GM12878 (cell line): ENCODE measurements at regions of chr1 and their contacts with region 1.

Region 1: GRCh38 chr1:174022080-174022975 is at the start of gene RC3H1:
- DNase-seq: peak; percentile 53
- ATAC-seq: peak; percentile 90
- H3K4me3 ChIP-seq: peak within 1 kb of the TSS; percentile 99
- H3K27ac ChIP-seq: peak within 1 kb of the TSS; percentile 88
- H3K4me1 ChIP-seq: peaks cover 5% of the 10 kb centered on the region
- H3K27me3 ChIP-seq: no peaks in the 10 kb centered on the region
- CTCF ChIP-seq: no peak
- EP300 ChIP-seq: 0 out of 4 replicates have a peak, but pooled peaks of 1 of the 2 experiments have one; percentile 15
- POLR2A ChIP-seq: peak; percentile 97
- RAD21 ChIP-seq: no peak
- polyA plus RNA-seq, gene RC3H1: 1.4 to 3.2 TPM

Region 2: DNA sequence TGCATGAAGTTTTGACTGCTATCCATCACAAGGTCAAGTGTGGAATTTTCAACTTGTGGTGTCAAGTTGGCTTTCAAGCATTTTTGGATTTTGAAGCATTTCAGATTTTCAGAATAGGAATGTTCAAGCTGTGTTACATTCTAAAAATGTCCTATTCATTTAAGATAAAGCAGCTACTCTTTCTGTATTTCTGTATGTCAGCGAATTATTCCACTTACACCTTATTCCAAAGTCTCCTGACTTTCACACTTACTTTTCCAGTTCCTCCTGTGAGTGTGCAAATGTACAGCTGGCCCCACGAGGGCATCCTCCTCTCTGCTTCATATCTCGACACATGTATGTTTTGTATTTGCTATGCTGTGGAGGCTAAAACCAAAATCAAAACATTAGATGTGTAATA is 52.1 kb before region 1 on chr1:
- CTCF ChIA-PET with region 1: no interaction called
- POLR2A ChIA-PET with region 1: no interaction called
- RAD21 ChIA-PET with region 1: no interaction called
- SMC1A ChIA-PET with region 1: interaction called, 3 read pairs
- in situ Hi-C with region 1: no loop called
- intact Hi-C with region 1: loop called (anchors 5 kb)
- DNase-seq: no peak
- ATAC-seq: no peak
- H3K4me3 ChIP-seq: no peak overlapping the region
- H3K27ac ChIP-seq: no peak overlapping the region
- H3K4me1 ChIP-seq: no peaks in the 10 kb centered on the region
- H3K27me3 ChIP-seq: no peaks in the 10 kb centered on the region
- CTCF ChIP-seq: no peak
- EP300 ChIP-seq: no peak
- POLR2A ChIP-seq: no peak
- RAD21 ChIP-seq: no peak

Region 3: DNA sequence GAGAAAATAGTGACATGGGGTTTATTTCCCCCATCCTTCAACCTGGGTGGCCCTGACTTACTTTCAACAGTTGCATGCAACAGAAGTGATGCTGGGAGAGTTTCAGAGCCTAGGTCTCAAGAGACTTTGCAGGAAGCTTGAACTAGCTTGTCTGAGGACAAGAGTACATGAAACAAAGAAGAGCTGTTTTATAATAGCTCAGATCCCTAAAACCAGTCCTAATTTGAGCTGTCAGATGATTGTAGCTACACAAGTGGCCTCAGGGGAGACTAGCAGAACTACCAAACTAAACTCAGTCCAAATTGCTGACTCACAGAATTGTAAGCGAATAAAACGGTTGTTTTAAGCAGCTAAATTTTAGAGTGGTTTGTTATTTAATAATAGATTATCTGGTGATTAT is 17.3 kb before region 1 on chr1:
- CTCF ChIA-PET with region 1: interaction called, 4 read pairs
- POLR2A ChIA-PET with region 1: interaction called, 16 read pairs
- RAD21 ChIA-PET with region 1: interaction called, 23 read pairs
- SMC1A ChIA-PET with region 1: interaction called, 16 read pairs
- in situ Hi-C with region 1: no loop called
- intact Hi-C with region 1: loop called (anchors 2 kb)
- DNase-seq: peak; percentile 83
- ATAC-seq: peak; percentile 95
- H3K4me3 ChIP-seq: no peak overlapping the region
- H3K27ac ChIP-seq: peak overlapping the region; percentile 54
- H3K4me1 ChIP-seq: peaks cover 10% of the 10 kb centered on the region
- H3K27me3 ChIP-seq: no peaks in the 10 kb centered on the region
- CTCF ChIP-seq: no peak
- EP300 ChIP-seq: peak; percentile 32 to 70; a peak in 1 of 4 replicates
- POLR2A ChIP-seq: no peak
- RAD21 ChIP-seq: no peak

Region 4: DNA sequence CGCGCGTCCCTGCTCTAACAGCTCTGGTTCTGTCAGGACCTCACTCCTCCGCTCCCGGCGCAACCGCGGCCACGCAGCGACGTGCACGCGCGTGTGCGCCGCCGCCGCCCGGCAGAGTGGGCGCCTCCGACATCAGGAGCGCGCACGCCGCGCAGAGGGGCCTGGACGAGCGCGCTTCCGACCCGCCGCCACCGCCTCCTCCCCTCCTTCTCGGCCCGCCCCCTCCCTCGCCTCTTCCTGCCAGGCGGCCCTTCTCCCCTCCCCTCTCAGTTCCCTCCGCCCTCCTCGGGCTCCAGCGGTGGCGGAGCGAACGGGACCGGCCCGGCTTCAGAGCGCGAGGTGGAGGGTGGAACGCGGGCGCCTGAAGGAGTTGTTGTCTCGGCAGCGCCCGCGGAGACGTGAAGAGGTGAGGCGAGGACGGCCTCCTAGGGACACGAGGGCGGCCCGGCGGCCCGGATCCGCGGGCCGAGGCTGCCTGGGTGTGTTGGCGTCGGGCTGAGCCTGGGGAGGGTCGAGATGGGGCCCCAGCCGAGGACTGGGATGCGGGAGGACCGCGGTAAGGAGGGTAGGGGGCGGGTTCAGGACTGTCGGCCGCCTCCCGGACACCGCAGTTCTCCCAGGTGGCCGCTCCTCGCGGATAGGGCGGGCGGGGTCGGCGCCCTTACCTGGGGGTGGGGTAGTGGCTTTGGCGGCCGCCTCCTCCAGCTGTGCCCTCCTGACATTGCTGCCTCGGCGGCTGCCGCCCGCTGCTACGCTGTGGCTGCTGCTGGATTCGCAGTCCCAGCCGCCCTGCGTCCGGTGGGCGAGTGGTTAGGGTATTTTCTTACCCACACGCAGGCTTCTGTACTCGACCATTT is 137.2 kb after region 1 on chr1 and contains the start of gene RABGAP1L:
- CTCF ChIA-PET with region 1: no interaction called
- POLR2A ChIA-PET with region 1: no interaction called
- RAD21 ChIA-PET with region 1: no interaction called
- SMC1A ChIA-PET with region 1: no interaction called
- in situ Hi-C with region 1: no loop called
- intact Hi-C with region 1: loop called (anchors 5 kb)
- DNase-seq: peak; percentile 55
- ATAC-seq: peak; percentile 84
- H3K4me3 ChIP-seq: peak within 1 kb of the TSS; percentile 91
- H3K27ac ChIP-seq: peak within 1 kb of the TSS; percentile 93
- H3K4me1 ChIP-seq: peaks cover 31% of the 10 kb centered on the region
- H3K27me3 ChIP-seq: no peaks in the 10 kb centered on the region; a peak in 1 of 4 replicates
- CTCF ChIP-seq: no peak
- EP300 ChIP-seq: no peak
- POLR2A ChIP-seq: peak; percentile 96
- RAD21 ChIP-seq: 0 out of 2 replicates have a peak, but pooled peaks have one; percentile 6
- polyA plus RNA-seq, gene RABGAP1L: 92.3 to 130 TPM